Psoas muscle (tissue), 8 donors: ENCODE measurements at regions of chr4 and their contacts with region 1.

Region 1: GRCh38 chr4:16026160-16026761 is 57.6 kb downstream of the PROM1 start:
- DNase-seq: no peak
- ATAC-seq: peak in 1 of 4 donors; percentile 71
- H3K4me3 ChIP-seq: no peak overlapping the region
- H3K27ac ChIP-seq: no peak overlapping the region
- H3K4me1 ChIP-seq: no peaks in the 10 kb centered on the region
- H3K27me3 ChIP-seq: peaks cover 0 to 2% (median 0%) of the 10 kb centered on the region in 3 donors
- CTCF ChIP-seq: peak; percentile 93

Region 2: GRCh38 chr4:16161851-16162408 is 135.7 kb after region 1 on chr4:
- intact Hi-C with region 1: loop called in 1 of 2 experiments (anchors 5 kb)
- DNase-seq: no peak
- ATAC-seq: no peak
- H3K4me3 ChIP-seq: no peak overlapping the region
- H3K27ac ChIP-seq: no peak overlapping the region
- H3K4me1 ChIP-seq: no peaks in the 10 kb centered on the region
- H3K27me3 ChIP-seq: no peaks in the 10 kb centered on the region
- CTCF ChIP-seq: peak; percentile 5

Region 3: DNA sequence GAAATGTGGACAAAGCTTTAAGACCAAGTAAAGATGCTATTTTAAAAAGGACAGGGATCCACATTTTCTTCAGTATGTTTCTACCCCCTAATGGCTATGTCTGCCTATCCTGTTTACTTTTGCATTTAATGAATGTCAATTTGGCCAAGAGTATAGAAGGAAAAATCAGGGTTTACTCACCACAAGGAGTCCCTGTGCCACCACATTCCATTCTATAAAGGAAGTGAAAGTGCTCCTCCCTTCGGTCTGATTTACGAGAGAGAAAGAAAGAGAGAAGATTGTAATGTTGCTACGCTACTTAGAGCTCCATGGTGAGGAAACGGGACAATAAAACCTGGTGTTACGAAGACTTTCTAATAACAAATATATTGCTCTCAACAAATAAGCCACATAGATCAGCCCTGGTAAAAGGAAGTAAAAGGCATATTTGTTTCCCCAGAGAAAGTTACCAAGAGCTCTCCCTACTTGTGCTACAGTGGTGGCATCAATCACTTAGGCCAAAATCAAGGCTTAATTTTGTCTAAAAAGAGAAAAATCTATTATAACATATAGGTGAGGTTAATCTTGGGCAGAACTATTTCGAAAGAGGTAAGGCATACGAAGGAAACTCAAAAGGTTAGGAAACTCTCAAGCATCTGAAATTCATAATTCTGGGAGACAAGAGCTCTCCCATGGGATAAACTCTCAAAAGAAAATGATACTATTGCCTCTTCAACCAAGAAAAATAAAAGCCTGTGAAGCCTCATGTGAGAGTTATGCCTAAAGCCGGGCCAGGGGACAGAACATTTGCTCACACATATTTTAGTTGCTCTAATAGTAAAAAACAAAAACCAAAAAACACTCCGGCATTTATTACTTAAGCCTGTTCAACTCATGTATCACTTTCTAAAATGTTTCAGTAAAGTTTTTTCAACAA is 170.5 kb after region 1 on chr4:
- intact Hi-C with region 1: loop called (anchors 2 to 5 kb)
- DNase-seq: no peak
- ATAC-seq: peak; percentile 73 to 89 (median 82)
- H3K4me3 ChIP-seq: peak overlapping the region; percentile 10
- H3K27ac ChIP-seq: peak overlapping the region; percentile 5
- H3K4me1 ChIP-seq: peaks cover 36% of the 10 kb centered on the region
- H3K27me3 ChIP-seq: no peaks in the 10 kb centered on the region
- CTCF ChIP-seq: peak; percentile 38

Region 4: GRCh38 chr4:16205298-16206164 is 179.3 kb after region 1 on chr4:
- intact Hi-C with region 1: loop called in 1 of 2 experiments (anchors 2 kb)
- DNase-seq: no peak
- ATAC-seq: peak; percentile 62 to 84 (median 72)
- H3K4me3 ChIP-seq: no peak overlapping the region
- H3K27ac ChIP-seq: no peak overlapping the region
- H3K4me1 ChIP-seq: peaks cover 37% of the 10 kb centered on the region
- H3K27me3 ChIP-seq: no peaks in the 10 kb centered on the region
- CTCF ChIP-seq: peak; percentile 55